Upper lobe of right lung (tissue), 1 donor: ENCODE measurements at regions of chr19 and their contacts with region 1.

Region 1: DNA sequence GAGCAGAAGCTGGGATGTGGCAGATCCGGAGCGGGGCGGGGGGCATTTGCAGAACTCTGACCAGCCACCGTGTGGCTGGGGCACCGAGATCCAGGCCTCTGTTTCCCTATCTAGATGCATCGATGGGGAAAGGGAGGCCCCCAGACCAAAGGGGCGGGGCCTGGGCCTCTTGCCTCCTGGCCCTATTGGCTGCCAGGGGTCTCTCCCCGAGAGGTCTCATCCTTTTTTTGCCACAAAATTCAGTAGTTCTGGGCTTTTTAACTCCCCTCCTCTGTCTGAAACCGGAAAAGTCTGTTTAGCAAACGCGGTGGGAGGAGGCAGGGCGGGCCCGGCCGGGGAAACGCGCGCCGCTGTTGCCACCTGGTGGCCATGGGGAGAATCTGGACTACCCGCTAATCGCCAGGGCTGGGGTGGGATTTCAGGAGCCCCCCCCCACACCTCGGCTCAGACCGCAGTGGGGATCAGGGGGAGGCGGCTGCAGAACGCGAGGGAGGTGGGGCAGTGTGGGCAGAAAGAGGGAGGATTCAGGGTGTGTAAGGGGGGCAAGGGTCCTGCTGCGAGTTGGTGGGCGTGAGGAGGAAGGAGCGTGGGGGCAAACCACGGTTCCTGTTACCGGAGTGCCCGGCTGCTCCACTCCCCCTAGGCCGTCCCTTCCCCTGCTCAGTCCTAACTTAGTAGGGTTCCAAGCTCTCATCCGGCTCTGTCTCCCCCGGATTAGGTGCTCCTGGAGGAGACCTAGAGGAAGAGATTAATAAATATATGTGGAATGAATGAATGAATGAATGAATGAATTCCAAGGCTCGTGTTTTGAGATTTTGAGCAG is 28.3 kb downstream of the IL12RB1 start:
- DNase-seq: peak; percentile 91
- ATAC-seq: peak; percentile 95
- H3K4me3 ChIP-seq: peak overlapping the region; percentile 28
- H3K27ac ChIP-seq: peak overlapping the region; percentile 83
- H3K4me1 ChIP-seq: peaks cover 14% of the 10 kb centered on the region
- H3K27me3 ChIP-seq: no peaks in the 10 kb centered on the region
- CTCF ChIP-seq: peak; percentile 98

Region 2: DNA sequence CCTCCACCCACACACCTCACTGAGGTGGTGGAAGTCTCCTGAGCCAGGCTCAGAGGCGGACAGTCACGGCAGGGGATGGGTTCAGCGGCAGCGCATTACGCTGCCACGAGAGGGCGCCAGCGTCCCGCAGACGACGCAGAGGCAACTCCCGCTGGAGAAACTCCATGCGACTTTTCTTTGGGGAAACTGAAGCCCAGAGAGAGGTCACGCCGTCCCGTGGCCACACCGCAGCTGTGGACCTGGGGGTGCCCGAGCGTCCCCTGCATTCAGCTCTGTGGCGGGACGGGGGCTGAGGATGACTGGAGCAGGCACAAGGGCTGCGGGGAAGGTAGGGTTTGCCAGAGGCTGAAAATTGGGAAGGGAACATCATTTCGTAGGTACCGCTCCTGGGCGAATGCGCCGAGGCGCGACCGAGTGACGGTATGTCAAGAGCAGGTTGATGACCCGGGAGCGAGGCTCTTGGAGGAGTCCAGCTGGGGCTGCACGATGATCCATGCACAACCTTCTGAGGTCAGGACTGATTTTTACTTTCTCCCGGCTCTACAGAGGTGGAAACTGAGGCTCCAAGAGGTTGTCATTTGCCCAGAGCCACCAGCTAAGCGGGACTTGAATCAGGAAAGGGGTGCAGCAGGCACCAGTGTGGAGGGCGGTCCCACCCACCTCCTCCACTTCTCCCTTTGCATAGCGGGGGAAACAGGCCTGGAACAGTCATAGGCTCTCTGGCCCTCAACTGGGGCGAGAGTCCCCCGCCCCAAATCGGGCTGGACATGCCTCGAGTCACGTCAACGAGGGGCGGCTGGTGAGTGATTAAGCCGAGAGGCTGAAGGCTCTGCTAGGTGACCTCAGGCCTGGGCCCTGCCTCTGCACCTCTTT is 51.1 kb before region 1 on chr19:
- intact Hi-C with region 1: loop called (anchors 2 kb)
- DNase-seq: peak; percentile 91
- ATAC-seq: peak; percentile 91
- H3K4me3 ChIP-seq: peak overlapping the region; percentile 65
- H3K27ac ChIP-seq: peak overlapping the region; percentile 89
- H3K4me1 ChIP-seq: peaks cover 19% of the 10 kb centered on the region
- H3K27me3 ChIP-seq: no peaks in the 10 kb centered on the region
- CTCF ChIP-seq: peak; percentile 97

Region 3: GRCh38 chr19:18281082-18282020 is 222.9 kb after region 1 on chr19 and contains the start of gene JUND:
- intact Hi-C with region 1: no loop called
- DNase-seq: peak; percentile 99
- ATAC-seq: peak; percentile 85
- H3K4me3 ChIP-seq: peak within 1 kb of the TSS; percentile 88
- H3K27ac ChIP-seq: peak within 1 kb of the TSS; percentile 100
- H3K4me1 ChIP-seq: peaks cover 33% of the 10 kb centered on the region
- H3K27me3 ChIP-seq: no peaks in the 10 kb centered on the region
- CTCF ChIP-seq: no peak
- total RNA-seq, gene JUND: 204 TPM